ENCODE measurements at regions of chr3 and their contacts with region 1.

Region 1: GRCh38 chr3:195259475-195260279 is 11.3 kb downstream of the XXYLT1 start:
- DNase-seq: peak; percentile 85
- H3K4me3 ChIP-seq: peak overlapping the region; percentile 57 to 64 (median 60)
- H3K27ac ChIP-seq: peak overlapping the region; percentile 32
- H3K4me1 ChIP-seq: peaks cover 19% of the 10 kb centered on the region
- H3K27me3 ChIP-seq: no peaks in the 10 kb centered on the region
- CTCF ChIP-seq: peak; percentile 51 to 61

Region 2: DNA sequence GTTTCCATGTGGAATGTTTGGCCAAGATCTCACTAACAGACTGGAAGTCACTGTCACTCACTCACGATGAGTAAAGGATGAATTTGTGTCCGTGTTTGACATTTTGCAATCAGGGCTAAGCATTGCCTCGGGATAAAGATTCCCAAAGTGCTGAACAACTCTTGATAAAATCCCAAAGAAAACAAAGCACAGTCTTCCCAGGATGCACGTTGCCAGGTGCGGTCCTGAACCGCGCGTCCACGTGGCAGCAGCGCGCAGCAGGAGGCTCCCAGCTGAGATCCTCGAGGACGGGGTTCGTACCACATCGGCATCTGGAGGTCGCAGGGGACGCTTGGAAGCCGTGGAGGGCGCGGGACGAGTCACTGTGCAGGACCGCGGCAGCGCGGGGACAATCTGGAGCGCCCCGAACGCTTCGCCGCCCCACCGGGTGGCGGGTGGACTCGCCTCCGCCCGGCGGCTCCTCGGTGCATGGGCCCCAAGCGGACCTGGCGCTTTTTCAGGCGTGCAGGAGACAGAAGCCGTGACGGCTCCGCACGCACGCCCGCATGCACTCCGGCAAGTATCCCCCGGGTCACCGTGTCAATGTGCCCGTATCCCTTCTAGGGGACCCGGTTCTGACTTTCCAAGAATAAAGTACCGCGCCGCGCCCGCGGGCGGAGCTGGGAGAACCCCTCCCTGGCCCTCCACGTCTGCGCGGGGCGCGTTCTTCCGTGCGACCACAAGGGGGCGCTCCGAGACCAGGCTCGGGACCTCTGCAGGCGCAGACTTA is 926.3 kb before region 1 on chr3:
- CTCF ChIA-PET with region 1: no interaction called
- dilution Hi-C with region 1: no loop called
- in situ Hi-C with region 1: no loop called
- intact Hi-C with region 1: loop called (anchors 10 kb)
- DNase-seq: peak; percentile 76
- H3K4me3 ChIP-seq: peak overlapping the region; percentile 5 to 37 (median 36)
- H3K27ac ChIP-seq: peak overlapping the region; percentile 36
- H3K4me1 ChIP-seq: peaks cover 35% of the 10 kb centered on the region
- H3K27me3 ChIP-seq: no peaks in the 10 kb centered on the region
- CTCF ChIP-seq: peak; percentile 73 to 98

Region 3: DNA sequence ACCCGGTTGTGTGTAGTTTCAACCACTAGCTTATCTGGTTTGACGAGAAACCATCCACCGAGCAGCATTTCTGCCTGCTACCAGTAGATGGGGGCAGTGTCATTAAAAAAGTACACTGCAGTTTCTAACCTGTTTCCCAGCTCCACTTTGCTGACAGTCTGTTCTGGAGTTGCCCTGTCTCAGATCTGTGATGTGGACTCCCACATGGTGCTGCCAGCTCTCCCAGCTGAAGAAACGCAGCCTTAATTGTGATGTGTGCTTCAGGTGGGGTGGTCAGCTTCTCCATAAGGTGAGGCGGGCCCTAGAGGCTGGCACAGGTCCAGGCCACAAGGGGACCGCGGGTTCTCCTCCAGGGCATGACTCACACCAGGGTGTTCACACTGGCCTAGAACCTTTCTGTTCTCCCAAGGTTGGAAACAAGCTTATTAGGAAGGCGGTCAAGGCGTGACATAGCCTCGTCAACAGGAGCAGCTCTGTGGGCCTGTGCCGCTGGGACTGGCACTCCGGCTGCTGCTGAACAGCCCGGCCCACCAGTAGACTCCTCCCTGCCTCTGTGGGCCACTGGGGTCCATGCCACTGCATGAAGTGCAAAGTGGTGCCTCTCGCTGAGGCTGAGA is 576.9 kb before region 1 on chr3:
- CTCF ChIA-PET with region 1: interaction called, 3 read pairs
- dilution Hi-C with region 1: no loop called
- in situ Hi-C with region 1: loop called (anchors 5 to 10 kb)
- intact Hi-C with region 1: loop called (anchors 1 kb)
- DNase-seq: peak; percentile 86
- H3K4me3 ChIP-seq: no peak overlapping the region
- H3K27ac ChIP-seq: no peak overlapping the region
- H3K4me1 ChIP-seq: peaks cover 40% of the 10 kb centered on the region
- H3K27me3 ChIP-seq: peaks cover 15% of the 10 kb centered on the region
- CTCF ChIP-seq: peak; percentile 87 to 92

Region 4: DNA sequence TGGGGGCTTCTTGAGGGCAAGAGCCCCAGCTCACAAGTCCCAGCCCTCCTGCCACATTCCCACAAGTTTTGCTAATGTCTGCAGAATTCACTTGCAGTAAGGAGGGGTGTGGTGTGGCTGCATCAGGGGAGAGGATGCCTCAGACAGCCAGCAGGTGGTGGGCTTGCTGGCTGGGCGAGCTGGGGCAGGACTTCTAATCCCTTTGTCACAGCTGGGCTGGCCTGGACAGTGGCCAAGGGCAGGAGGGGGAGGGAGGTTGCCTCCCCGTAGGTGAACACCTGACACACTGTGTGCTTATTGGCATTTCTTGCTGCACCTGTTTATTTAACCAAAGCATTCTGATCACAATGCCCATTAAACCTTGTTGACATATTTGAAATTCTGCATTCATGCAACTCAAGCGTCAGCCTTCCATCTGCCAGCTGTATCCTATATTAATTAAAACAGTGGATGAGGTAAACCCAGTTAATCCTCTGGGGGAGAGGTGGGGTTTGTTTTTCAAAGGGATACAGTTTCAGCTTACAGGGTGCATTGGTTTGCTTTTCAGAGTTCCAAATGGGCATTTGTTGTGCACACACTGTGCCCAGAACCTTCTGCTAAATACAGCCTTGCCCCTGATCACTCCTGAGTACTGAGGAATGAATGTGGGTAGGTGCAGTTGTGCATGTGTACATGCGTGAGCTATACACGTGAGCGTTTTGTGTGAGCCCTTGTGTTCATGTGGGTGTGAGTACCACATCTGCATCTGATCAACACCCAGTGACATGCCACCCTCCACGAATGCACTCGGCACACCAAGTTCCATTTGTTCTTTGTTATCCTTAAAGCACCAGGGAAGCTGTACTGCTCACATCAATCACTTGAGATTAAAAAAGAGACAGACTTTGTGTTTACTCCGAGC is 257.5 kb before region 1 on chr3:
- CTCF ChIA-PET with region 1: no interaction called
- dilution Hi-C with region 1: no loop called
- in situ Hi-C with region 1: loop called in 1 of 2 experiments (anchors 25 kb)
- intact Hi-C with region 1: loop called (anchors 1 kb)
- DNase-seq: peak; percentile 52
- H3K4me3 ChIP-seq: no peak overlapping the region
- H3K27ac ChIP-seq: no peak overlapping the region
- H3K4me1 ChIP-seq: no peaks in the 10 kb centered on the region
- H3K27me3 ChIP-seq: no peaks in the 10 kb centered on the region
- CTCF ChIP-seq: peak; percentile 50 to 62

Region 5: GRCh38 chr3:195182470-195182795 is 77.2 kb before region 1 on chr3:
- CTCF ChIA-PET with region 1: no interaction called
- dilution Hi-C with region 1: loop called (anchors 5 kb)
- in situ Hi-C with region 1: no loop called
- intact Hi-C with region 1: loop called (anchors 5 kb)
- DNase-seq: no peak
- H3K4me3 ChIP-seq: no peak overlapping the region
- H3K27ac ChIP-seq: no peak overlapping the region
- H3K4me1 ChIP-seq: peaks cover 20% of the 10 kb centered on the region
- H3K27me3 ChIP-seq: no peaks in the 10 kb centered on the region
- CTCF ChIP-seq: no peak

Region 6: DNA sequence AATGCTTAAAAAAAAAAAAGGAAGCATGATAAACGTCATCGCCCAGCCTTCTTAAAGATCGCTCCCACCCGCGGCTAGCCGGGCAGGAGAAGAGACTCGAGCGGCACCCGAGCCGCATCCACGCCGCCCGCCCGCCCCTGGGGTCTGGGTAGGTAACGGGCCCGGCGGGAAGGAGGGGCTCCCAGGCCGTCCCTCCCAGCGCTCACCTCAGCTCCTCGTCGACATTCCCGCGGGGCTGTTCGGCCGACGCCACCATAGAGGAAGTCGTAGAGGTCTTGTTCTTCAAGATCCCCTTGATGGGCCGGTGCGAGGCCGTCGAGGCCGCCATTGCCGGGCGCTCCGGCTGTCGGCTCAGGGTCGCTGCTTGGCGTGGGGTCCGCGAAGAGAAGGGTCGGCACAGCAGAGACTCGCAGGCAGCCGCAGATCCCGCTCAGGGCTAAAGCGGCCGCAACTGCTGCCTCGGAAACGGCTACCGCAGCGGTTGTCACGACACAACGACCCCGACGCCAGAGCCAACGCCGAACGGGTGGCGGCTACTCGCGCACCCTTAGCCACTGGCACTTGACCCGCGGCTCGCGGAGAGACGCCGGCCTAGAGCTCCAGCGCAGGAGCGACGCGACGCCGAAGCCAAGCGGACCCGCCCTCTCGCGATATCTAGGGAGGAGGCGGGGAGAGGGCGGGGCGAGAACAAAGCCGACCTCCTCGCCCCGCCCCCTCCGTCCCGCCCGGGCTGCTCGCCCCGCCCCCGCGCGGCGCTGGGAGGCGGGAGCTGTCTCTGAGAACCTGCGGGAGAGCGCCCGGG is 283.2 kb after region 1 on chr3 and contains the start of gene PPP1R2:
- CTCF ChIA-PET with region 1: no interaction called
- dilution Hi-C with region 1: no loop called
- in situ Hi-C with region 1: loop called (anchors 10 to 25 kb)
- intact Hi-C with region 1: no loop called
- DNase-seq: peak; percentile 86
- H3K4me3 ChIP-seq: peak within 1 kb of the TSS; percentile 76 to 93 (median 88)
- H3K27ac ChIP-seq: peak within 1 kb of the TSS; percentile 74
- H3K4me1 ChIP-seq: peaks cover 26% of the 10 kb centered on the region
- H3K27me3 ChIP-seq: no peaks in the 10 kb centered on the region
- CTCF ChIP-seq: no peak
- total RNA-seq, gene PPP1R2: 45.5 to 129 TPM